Activated CD4-positive, alpha-beta memory T cell treated with anti-CD3 and anti-CD28 coated beads for 36 hours (primary cell): ENCODE measurements at regions of chr20 and their contacts with region 1.

Region 1: DNA sequence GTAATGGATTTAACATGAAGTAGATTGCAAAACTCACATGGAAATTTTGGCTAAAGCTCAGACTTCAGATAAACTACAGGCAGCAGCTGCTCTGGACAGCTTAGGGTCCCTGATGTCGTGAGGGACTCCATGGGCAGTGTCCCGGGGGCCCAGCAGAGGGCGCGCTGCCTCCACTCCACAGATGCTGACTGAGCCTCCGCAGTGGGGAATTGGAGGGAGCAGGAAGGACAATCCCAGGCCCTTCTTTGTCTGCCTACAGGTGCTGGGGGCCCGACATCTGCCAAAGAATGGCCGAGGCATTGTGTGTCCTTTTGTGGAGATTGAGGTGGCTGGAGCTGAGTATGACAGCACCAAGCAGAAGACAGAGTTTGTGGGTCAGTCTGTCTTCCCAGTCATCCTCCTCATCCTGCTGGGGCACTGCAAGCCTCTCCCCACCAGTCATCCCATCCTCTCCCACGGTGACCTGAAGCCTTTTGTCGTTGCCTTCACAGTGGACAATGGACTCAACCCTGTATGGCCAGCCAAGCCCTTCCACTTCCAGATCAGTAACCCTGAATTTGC is 35.9 kb downstream of the PLCG1 start:
- DNase-seq: peak; percentile 71
- H3K4me3 Mint-ChIP-seq: no peak overlapping the region
- H3K27ac Mint-ChIP-seq: peak overlapping the region; percentile 10
- H3K4me1 Mint-ChIP-seq: peaks cover 6% of the 10 kb centered on the region
- H3K27me3 Mint-ChIP-seq: no peaks in the 10 kb centered on the region

Region 2: DNA sequence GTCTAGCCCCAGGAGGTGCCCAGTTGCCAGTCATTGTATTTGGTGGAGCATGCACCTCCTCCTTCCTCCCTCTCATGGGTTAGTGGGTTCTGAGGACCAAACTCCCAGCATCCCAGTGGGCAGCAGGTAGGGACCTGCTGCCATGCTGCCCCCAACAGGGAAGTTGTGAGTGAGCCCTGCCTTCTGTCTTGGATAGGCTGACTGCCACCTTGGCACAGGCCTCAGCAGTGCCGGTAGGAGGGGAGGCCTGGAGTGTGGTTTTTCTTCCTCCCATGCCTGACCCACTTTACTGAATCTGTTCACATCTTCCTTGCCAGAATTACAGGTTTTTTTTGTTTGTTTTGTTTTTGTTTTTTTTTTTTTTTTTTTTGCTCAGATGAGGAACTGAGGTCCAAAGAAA is 11.4 kb before region 1 on chr20:
- CTCF ChIA-PET with region 1: interaction called, 63 read pairs
- POLR2A ChIA-PET with region 1: no interaction called
- intact Hi-C with region 1: no loop called
- DNase-seq: no peak
- H3K4me3 Mint-ChIP-seq: no peak overlapping the region
- H3K27ac Mint-ChIP-seq: peak overlapping the region; percentile 84
- H3K4me1 Mint-ChIP-seq: peaks cover 61% of the 10 kb centered on the region
- H3K27me3 Mint-ChIP-seq: no peaks in the 10 kb centered on the region

Region 3: GRCh38 chr20:41196653-41197225 is 23.5 kb after region 1 on chr20:
- CTCF ChIA-PET with region 1: interaction called, 11 read pairs
- POLR2A ChIA-PET with region 1: no interaction called
- intact Hi-C with region 1: no loop called
- DNase-seq: no peak
- H3K4me3 Mint-ChIP-seq: no peak overlapping the region
- H3K27ac Mint-ChIP-seq: no peak overlapping the region
- H3K4me1 Mint-ChIP-seq: peaks cover 6% of the 10 kb centered on the region
- H3K27me3 Mint-ChIP-seq: no peaks in the 10 kb centered on the region

Region 4: DNA sequence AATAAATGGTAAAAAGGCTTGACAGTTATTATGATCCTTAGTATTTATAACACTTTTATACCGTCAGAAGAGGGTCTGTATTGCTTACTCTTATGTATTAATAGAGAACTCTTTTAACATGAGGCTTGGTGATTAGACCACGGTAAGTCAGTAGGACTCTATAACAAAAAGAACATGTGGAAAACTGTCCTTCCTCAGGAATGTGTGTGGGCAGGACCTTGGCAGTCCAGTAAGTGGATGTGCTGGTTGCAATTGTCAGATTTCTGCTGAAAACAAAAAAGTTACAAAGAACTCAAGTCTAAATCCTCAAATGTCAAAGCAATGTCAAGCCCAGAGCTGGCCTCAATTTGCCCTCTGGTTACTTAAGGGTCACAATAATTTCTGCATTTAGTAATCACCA is 45.2 kb after region 1 on chr20:
- CTCF ChIA-PET with region 1: interaction called, 20 read pairs
- POLR2A ChIA-PET with region 1: no interaction called
- intact Hi-C with region 1: no loop called
- DNase-seq: no peak
- H3K4me3 Mint-ChIP-seq: no peak overlapping the region
- H3K27ac Mint-ChIP-seq: no peak overlapping the region
- H3K4me1 Mint-ChIP-seq: no peaks in the 10 kb centered on the region
- H3K27me3 Mint-ChIP-seq: no peaks in the 10 kb centered on the region

Region 5: DNA sequence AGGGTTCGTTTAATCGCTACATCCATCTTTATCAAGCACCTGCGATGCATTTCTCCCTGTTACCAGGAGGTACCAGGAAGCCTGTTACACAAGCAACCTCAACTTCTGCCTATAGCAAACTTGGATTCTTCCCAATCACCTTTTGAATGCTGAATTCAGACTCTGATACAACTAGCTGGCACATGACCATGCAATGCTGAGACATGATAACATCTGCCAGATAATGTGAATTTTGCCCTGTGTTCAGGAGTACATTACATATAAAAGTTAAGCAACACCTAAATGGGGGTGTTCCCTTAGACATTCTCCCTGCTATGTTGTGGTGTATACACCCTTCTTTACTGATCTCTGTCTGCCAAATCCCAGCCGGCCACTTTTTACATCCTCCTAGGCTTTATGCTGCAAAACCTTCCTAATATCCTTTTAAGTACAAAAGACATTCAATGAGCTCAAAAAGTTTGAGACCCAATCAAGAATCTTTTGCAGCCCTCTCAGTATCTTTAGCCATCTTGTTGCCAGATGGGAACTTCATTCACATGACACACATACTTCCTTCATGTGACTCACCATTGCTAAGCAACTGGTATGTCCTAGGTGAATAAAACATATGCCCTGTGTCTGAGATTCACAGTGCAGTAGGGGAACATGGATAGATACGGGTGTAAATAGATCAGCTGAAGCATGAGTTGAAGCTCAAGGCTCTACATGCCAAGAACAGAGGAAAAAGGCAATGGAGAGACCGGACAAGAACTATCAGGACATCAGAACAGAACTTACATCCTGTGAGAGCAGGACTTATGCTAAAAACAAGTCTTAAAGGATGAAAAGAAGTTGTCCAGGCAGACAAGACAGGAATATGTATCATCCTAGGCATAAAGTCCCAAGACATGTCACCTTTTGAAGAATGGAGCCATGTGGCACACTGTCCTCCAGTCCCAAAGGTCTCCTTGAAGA is 60.0 kb after region 1 on chr20:
- CTCF ChIA-PET with region 1: interaction called, 22 read pairs
- POLR2A ChIA-PET with region 1: no interaction called
- intact Hi-C with region 1: loop called (anchors 1 kb)
- DNase-seq: no peak
- H3K4me3 Mint-ChIP-seq: no peak overlapping the region
- H3K27ac Mint-ChIP-seq: no peak overlapping the region
- H3K4me1 Mint-ChIP-seq: peaks cover 20% of the 10 kb centered on the region
- H3K27me3 Mint-ChIP-seq: no peaks in the 10 kb centered on the region

Region 6: GRCh38 chr20:41339507-41340326 is 166.5 kb after region 1 on chr20:
- CTCF ChIA-PET with region 1: interaction called, 60 read pairs
- POLR2A ChIA-PET with region 1: no interaction called
- intact Hi-C with region 1: loop called (anchors 1 kb)
- DNase-seq: peak; percentile 90
- H3K4me3 Mint-ChIP-seq: peak overlapping the region; percentile 63
- H3K27ac Mint-ChIP-seq: no peak overlapping the region
- H3K4me1 Mint-ChIP-seq: peaks cover 5% of the 10 kb centered on the region
- H3K27me3 Mint-ChIP-seq: peaks cover 7% of the 10 kb centered on the region